ENCODE measurements at regions of chr17 and their contacts with region 1.

Region 1: DNA sequence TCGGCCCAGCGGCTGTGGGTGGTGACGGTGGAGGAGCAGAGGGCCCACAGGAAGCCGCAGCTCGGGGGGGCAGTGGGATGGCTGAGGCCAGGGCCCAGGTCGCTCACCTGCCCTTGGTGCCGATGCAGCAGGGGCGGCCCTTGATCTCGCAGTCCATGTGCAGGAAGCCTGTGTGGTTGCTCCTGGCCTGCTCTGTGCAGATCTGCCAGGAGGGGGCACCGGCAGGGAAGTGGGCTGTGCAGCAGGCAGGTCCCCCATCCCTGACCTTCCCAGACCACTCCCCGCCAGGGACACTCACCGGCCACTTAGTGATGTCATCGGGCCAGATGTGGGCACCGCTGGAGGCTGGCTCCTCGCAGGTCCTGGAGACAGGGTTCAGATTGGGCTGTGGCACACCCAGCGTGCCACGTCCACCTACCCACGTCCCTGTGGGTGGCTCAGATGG is 6.2 kb downstream of the AANAT start:
- DNase-seq: no peak
- ATAC-seq: peak; percentile 41
- H3K4me3 ChIP-seq: no peak overlapping the region
- H3K4me3 Mint-ChIP-seq: no peak overlapping the region
- H3K27ac ChIP-seq: no peak overlapping the region
- H3K27ac Mint-ChIP-seq: peak overlapping the region; percentile 71
- H3K4me1 ChIP-seq: peaks cover 0 to 23% of the 10 kb centered on the region in 2 donors
- H3K4me1 Mint-ChIP-seq: peaks cover 27% of the 10 kb centered on the region
- H3K27me3 ChIP-seq: no peaks in the 10 kb centered on the region
- H3K27me3 Mint-ChIP-seq: no peaks in the 10 kb centered on the region
- CTCF ChIP-seq: no peak

Region 2: DNA sequence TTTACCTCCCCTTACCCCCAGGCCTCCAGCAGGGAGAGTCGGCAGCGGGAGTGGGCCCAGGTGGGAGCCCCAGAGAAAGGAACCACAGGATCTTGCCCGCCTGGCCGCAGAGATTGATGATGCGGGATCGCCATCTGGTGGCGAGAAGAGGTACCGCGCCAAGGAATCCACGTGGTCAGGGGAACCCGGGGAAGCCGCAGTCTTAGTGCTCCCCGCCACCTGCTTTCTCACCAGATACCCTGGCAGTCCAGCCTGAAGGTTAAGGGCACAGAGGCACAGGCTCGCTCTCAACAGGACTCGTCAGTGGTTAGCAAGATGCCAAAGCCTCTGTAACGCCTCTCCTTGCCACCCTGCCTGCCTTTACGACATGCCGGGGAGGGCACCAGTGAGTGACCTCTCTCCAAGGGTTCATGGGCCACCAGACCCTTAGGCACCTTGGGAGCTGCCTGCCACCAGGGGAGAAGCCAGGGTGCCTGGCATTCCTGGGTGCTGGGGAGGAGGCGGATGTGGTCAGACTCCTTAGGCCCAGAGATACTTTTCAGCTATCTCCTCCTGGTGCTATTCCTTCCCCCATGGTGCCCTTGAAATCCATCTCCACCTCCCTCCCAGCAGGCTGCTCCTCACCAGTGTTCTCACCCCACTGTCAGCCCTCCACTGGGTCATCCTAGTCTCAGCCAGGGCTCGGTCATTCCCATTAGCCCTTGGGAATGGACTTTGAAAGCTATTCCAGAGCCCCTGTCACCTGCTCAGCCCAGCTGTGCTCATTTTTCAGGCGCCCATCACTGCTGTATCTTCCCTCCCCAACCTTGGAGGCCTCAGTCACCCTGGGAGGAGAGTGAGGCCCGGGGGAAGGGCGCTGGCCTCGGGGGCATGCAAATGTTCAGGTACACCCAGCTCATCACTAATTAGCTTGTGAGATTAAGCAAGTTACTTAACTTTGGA is 33.1 kb after region 1 on chr17:
- CTCF ChIA-PET with region 1: interaction called, 442 read pairs
- POLR2A ChIA-PET with region 1: interaction called, 478 read pairs
- intact Hi-C with region 1: no loop called
- DNase-seq: peak; percentile 92
- ATAC-seq: peak; percentile 73
- H3K4me3 ChIP-seq: no peak overlapping the region
- H3K4me3 Mint-ChIP-seq: no peak overlapping the region
- H3K27ac ChIP-seq: no peak overlapping the region
- H3K27ac Mint-ChIP-seq: peak overlapping the region; percentile 50
- H3K4me1 ChIP-seq: peaks cover 14 to 28% of the 10 kb centered on the region in 2 donors
- H3K4me1 Mint-ChIP-seq: peaks cover 28% of the 10 kb centered on the region
- H3K27me3 ChIP-seq: no peaks in the 10 kb centered on the region
- H3K27me3 Mint-ChIP-seq: peaks cover 2% of the 10 kb centered on the region
- CTCF ChIP-seq: peak; percentile 87

Region 3: GRCh38 chr17:76597728-76598474 is 124.3 kb after region 1 on chr17:
- CTCF ChIA-PET with region 1: no interaction called
- POLR2A ChIA-PET with region 1: no interaction called
- intact Hi-C with region 1: no loop called
- DNase-seq: no peak
- ATAC-seq: no peak
- H3K4me3 ChIP-seq: no peak overlapping the region
- H3K4me3 Mint-ChIP-seq: no peak overlapping the region
- H3K27ac ChIP-seq: no peak overlapping the region
- H3K27ac Mint-ChIP-seq: no peak overlapping the region
- H3K4me1 ChIP-seq: no peaks in the 10 kb centered on the region
- H3K4me1 Mint-ChIP-seq: no peaks in the 10 kb centered on the region
- H3K27me3 ChIP-seq: peaks cover 0 to 2% (median 0%) of the 10 kb centered on the region in 4 experiments
- H3K27me3 Mint-ChIP-seq: peaks cover 49% of the 10 kb centered on the region
- CTCF ChIP-seq: no peak